Transverse colon (tissue), 4 donors: ENCODE measurements at regions of chr17 and their contacts with region 1.

Region 1: GRCh38 chr17:50392621-50393020 is 4.7 kb downstream of the LRRC59 start:
- DNase-seq: no peak
- H3K4me3 ChIP-seq: no peak overlapping the region
- H3K27ac ChIP-seq: no peak overlapping the region
- H3K4me1 ChIP-seq: peaks cover 4 to 23% (median 19%) of the 10 kb centered on the region in 4 donors
- H3K27me3 ChIP-seq: no peaks in the 10 kb centered on the region
- CTCF ChIP-seq: no peak
- EP300 ChIP-seq: no peak
- POLR2A ChIP-seq: no peak

Region 2: DNA sequence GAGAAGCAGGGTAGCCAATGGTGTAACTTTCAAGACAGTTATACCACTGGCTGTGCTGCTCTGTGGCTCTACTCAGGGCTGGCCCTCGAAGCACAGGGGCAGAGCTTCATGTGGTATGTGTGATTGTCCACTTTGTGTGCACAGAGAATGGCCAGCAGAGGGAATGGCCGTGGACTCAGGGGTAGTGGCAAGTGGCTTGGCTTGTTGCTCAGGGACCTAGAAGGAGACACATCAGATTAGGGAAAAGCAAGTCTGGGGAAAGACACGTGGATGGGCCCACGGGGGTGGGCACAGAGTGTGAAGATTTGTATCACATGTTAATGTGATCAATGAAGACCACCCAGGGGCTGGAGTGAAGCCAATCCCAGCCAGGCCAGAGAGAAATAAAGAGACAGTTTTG is 66.7 kb before region 1 on chr17:
- in situ Hi-C with region 1: no loop called
- intact Hi-C with region 1: loop called (anchors 2 kb)
- DNase-seq: no peak
- H3K4me3 ChIP-seq: no peak overlapping the region
- H3K27ac ChIP-seq: no peak overlapping the region
- H3K4me1 ChIP-seq: no peaks in the 10 kb centered on the region
- H3K27me3 ChIP-seq: no peaks in the 10 kb centered on the region
- CTCF ChIP-seq: no peak
- EP300 ChIP-seq: no peak
- POLR2A ChIP-seq: no peak

Region 3: GRCh38 chr17:50514946-50515702 is 122.5 kb after region 1 on chr17:
- in situ Hi-C with region 1: no loop called
- intact Hi-C with region 1: no loop called
- DNase-seq: no peak
- H3K4me3 ChIP-seq: no peak overlapping the region
- H3K27ac ChIP-seq: peak overlapping the region in 1 of 4 donors; percentile 32
- H3K4me1 ChIP-seq: peaks cover 0 to 22% (median 2%) of the 10 kb centered on the region in 4 donors
- H3K27me3 ChIP-seq: no peaks in the 10 kb centered on the region
- CTCF ChIP-seq: no peak
- EP300 ChIP-seq: no peak
- POLR2A ChIP-seq: no peak

Region 4: GRCh38 chr17:50541716-50542688 is 149.4 kb after region 1 on chr17:
- in situ Hi-C with region 1: no loop called
- intact Hi-C with region 1: no loop called
- DNase-seq: peak; percentile 92
- H3K4me3 ChIP-seq: peak overlapping the region; percentile 32 to 57 (median 38)
- H3K27ac ChIP-seq: peak overlapping the region; percentile 84 to 93 (median 86)
- H3K4me1 ChIP-seq: peaks cover 12 to 68% (median 49%) of the 10 kb centered on the region in 4 donors
- H3K27me3 ChIP-seq: no peaks in the 10 kb centered on the region
- CTCF ChIP-seq: peak in 3 of 5 experiments; percentile 7 to 16 (median 10)
- EP300 ChIP-seq: no peak
- POLR2A ChIP-seq: peak; percentile 64